Activated CD4-positive, alpha-beta memory T cell treated with anti-CD3 and anti-CD28 coated beads for 36 hours (primary cell): ENCODE measurements at regions of chr11 and their contacts with region 1.

Region 1: DNA sequence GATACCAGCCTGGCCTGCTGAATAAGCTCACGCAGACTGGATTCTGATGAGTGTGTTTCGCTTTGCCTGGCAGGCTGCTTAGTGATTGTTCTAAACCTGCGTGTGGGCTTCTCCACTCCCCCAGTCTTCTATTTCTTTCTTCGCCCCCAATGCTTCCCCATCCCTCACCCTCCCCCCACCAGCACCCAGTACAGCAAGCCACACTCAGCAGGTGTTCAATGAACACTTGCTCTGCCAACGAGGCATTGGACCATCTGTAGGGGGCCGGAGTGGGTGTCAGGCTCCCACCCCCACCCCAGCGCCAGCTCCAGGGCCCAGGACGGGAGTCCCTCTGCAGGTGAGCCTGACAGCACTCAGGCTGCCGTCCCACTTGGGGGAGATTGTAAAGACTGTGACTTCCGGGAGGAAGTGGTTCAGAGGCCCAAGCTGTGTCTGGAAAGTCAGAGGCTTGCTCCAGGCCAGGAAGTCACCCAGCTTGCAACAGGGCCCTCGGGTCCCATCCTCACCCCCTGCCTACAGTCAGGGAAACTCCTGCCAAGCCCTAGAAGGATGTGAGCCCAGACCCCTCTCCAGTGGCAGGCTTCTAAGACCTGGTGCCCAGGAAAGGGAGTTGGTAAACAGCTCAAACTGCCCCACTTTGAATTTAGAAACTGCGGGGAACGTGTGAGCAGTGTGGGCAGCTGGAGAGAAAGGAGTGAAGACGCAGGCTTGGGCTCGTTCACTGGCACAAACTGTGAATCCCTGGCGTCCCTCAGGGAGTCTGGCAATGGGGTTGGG is 66.3 kb upstream of the PRDM11 start:
- DNase-seq: peak; percentile 75
- H3K4me3 Mint-ChIP-seq: peak overlapping the region; percentile 42
- H3K27ac Mint-ChIP-seq: peak overlapping the region; percentile 85
- H3K4me1 Mint-ChIP-seq: peaks cover 35% of the 10 kb centered on the region
- H3K27me3 Mint-ChIP-seq: no peaks in the 10 kb centered on the region

Region 2: DNA sequence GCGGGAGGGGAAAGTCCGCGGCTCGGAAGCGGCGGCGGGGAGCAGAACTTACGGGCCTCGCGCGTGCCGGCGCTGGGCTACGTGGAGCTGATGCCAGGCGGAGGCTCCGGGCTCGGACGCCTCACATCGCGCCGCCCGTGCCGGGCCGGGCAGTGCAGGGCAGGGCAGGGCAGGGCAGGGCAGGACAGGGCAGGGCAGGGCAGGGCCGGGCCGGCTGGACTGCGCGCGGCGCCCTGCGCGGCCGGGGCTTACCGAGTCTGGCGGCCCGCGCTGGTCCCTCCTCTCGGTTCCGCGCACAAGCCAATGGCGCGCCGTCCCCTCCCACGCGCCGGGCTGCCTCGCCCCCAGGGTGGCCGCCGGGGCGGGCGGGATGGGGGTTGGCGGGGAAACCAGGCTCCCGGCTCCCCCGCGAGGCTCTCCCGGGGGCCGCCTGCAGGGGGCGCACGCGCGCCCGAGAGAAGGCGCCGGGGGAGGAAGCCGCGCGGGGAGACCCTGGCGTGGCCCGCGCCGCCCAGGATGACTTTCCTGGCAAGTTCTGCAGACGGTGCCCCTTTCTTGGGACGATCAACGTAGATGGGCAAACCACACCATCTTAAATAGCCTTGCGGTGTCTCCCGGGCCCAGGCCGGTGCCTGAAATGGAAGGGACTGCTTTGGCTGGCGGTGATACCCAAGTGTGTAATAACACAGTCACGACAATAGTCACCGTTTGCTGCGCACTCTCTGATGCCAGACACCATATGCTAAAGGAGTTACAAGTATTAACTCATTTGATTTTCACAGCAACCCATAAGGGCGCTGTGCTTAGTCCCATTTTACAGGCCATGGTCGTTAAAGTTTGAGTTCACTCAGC is 129.3 kb before region 1 on chr11 and contains the start of gene TP53I11:
- CTCF ChIA-PET with region 1: interaction called, 4 read pairs
- POLR2A ChIA-PET with region 1: no interaction called
- intact Hi-C with region 1: loop called (anchors 5 kb)
- DNase-seq: peak; percentile 82
- H3K4me3 Mint-ChIP-seq: peak within 1 kb of the TSS; percentile 76
- H3K27ac Mint-ChIP-seq: no peak within 1 kb of the TSS
- H3K4me1 Mint-ChIP-seq: peaks cover 6% of the 10 kb centered on the region
- H3K27me3 Mint-ChIP-seq: no peaks in the 10 kb centered on the region
- total RNA-seq, gene TP53I11: 15.7 to 17.6 TPM

Region 3: DNA sequence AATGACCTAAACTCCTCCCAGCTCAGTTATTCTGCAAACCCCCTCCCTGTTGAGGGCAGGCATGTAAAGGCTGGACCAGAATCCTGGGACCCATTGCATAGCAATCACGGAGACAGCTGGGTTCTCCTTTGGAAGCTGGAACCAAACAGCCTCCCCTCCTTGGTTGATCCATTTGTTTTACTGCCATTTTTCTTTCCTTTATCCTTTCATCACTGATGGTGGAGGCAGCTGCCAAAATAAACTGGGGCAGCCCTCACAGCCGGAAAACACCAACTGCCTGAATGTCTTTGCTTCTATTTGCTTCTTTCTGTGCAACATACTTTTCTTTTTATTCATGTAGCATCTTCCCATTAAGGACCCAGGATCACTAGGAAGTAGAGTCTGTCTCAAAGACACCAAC is 356.0 kb after region 1 on chr11:
- CTCF ChIA-PET with region 1: no interaction called
- POLR2A ChIA-PET with region 1: no interaction called
- intact Hi-C with region 1: no loop called
- DNase-seq: no peak
- H3K4me3 Mint-ChIP-seq: no peak overlapping the region
- H3K27ac Mint-ChIP-seq: no peak overlapping the region
- H3K4me1 Mint-ChIP-seq: no peaks in the 10 kb centered on the region
- H3K27me3 Mint-ChIP-seq: peaks cover 11% of the 10 kb centered on the region